ENCODE measurements at regions of chr17 and their contacts with region 1.

Region 1: GRCh38 chr17:30104575-30105339 is 11.9 kb upstream of the NSRP1 start:
- DNase-seq: peak; percentile 58
- H3K4me3 Mint-ChIP-seq: peak overlapping the region; percentile 82
- H3K27ac Mint-ChIP-seq: no peak overlapping the region
- H3K4me1 Mint-ChIP-seq: peaks cover 6% of the 10 kb centered on the region
- H3K27me3 Mint-ChIP-seq: peaks cover 17% of the 10 kb centered on the region

Region 2: GRCh38 chr17:30236766-30237165 is 132.0 kb after region 1 on chr17:
- intact Hi-C with region 1: loop called (anchors 2 kb)
- DNase-seq: no peak
- H3K4me3 Mint-ChIP-seq: peak overlapping the region; percentile 19
- H3K27ac Mint-ChIP-seq: no peak overlapping the region
- H3K4me1 Mint-ChIP-seq: peaks cover 11% of the 10 kb centered on the region
- H3K27me3 Mint-ChIP-seq: peaks cover 69% of the 10 kb centered on the region

Region 3: GRCh38 chr17:30716461-30717300 is 611.9 kb after region 1 on chr17:
- intact Hi-C with region 1: loop called (anchors 1 kb)
- DNase-seq: no peak
- H3K4me3 Mint-ChIP-seq: no peak overlapping the region
- H3K27ac Mint-ChIP-seq: peak overlapping the region; percentile 40
- H3K4me1 Mint-ChIP-seq: peaks cover 13% of the 10 kb centered on the region
- H3K27me3 Mint-ChIP-seq: peaks cover 6% of the 10 kb centered on the region